Naive thymus-derived CD4-positive, alpha-beta T cell (primary cell): ENCODE measurements at regions of chr6 and their contacts with region 1.

Region 1: DNA sequence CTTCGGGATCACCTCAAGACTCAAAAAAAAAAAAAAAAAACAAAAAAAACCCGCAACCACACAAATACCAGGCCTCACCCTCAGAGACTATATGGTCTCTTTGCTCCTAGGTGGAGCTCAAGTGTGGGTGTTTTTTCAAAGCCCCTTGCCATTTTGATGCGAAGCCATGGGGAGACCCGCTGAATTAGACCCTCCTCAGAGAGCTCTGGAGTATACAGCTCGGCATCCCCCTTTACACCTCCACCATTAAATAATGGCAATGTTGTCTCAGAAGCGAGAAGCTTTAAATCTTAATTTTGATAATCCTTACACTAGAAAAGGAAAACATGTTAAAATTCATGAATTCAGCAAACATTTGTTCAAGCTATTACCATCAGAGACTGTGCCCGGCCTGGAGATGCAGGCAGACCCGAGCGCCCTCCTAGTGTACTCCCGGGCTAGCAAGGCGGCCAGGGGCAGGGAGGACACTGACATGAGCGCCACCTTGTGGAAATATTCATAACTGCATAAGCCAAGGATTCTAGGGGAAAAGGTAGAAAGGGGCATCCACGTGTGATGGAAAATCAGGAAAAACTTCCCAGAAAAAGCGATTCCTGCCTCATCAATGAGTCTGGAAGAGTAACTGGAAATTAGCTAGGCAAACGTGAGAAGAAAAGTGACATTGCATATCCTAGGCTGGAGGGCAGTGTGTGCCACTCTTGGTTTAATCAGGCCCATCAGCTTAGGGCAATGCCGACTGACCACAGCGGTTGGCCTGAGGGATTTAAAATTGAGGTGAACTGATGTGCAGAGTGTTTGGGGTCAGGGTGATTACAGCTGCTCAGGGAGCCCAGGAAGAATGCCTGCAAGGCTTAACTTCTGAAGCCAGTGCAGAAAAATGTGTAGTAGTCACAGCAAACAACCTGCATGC is 72.5 kb downstream of the B3GAT2 start:
- DNase-seq: peak; percentile 19 to 64 (median 45)
- ATAC-seq: peak; percentile 85
- H3K4me3 ChIP-seq: no peak overlapping the region
- H3K4me3 Mint-ChIP-seq: no peak overlapping the region
- H3K27ac ChIP-seq: no peak overlapping the region
- H3K27ac Mint-ChIP-seq: no peak overlapping the region
- H3K4me1 ChIP-seq: no peaks in the 10 kb centered on the region
- H3K4me1 Mint-ChIP-seq: peaks cover 0 to 4% (median 0%) of the 10 kb centered on the region in 7 donors
- H3K27me3 ChIP-seq: no peaks in the 10 kb centered on the region
- H3K27me3 Mint-ChIP-seq: peaks cover 8 to 26% (median 20%) of the 10 kb centered on the region in 5 donors

Region 2: DNA sequence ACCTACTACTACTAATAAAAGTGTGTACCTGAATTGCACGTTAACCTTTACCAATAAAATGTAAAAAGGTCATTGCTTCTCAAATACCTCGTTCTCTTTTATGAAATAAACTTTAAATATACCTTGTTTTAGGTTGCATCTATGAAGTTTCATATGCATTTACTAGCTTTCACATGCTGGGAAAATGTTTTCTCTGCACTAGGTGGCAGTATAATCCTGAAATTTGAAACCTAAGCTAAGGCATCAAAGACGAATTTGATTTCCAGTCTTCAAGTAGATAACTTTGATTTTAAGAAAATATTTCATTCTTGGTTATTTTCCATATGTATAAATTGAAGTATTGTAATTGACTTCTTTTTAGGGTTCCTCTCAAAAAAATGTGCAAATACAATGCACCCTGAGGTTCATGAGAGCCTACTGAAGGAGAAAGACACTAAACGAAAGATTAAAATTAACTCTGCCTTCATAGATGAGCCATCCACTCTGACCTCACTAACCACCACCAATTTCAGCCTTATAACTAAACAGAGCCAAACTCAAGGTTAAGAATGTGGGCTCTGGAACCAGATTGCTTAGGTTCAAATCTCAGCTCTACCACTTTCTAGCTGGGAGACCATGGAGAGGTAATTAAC is 574.1 kb before region 1 on chr6:
- CTCF ChIA-PET with region 1: interaction called, 4 read pairs
- POLR2A ChIA-PET with region 1: no interaction called
- intact Hi-C with region 1: loop called in 1 of 2 experiments (anchors 1 kb)
- DNase-seq: peak in 5 of 9 donors; percentile 7 to 21 (median 11)
- ATAC-seq: no peak
- H3K4me3 ChIP-seq: no peak overlapping the region
- H3K4me3 Mint-ChIP-seq: no peak overlapping the region
- H3K27ac ChIP-seq: no peak overlapping the region
- H3K27ac Mint-ChIP-seq: no peak overlapping the region
- H3K4me1 ChIP-seq: no peaks in the 10 kb centered on the region
- H3K4me1 Mint-ChIP-seq: peaks cover 0 to under 1% (median 0%) of the 10 kb centered on the region in 7 donors
- H3K27me3 ChIP-seq: no peaks in the 10 kb centered on the region
- H3K27me3 Mint-ChIP-seq: peaks cover 9 to 41% (median 28%) of the 10 kb centered on the region in 5 donors

Region 3: GRCh38 chr6:70538376-70538775 is 346.0 kb before region 1 on chr6:
- CTCF ChIA-PET with region 1: no interaction called
- POLR2A ChIA-PET with region 1: no interaction called
- intact Hi-C with region 1: loop called in 1 of 2 experiments (anchors 5 kb)
- DNase-seq: no peak
- ATAC-seq: no peak
- H3K4me3 ChIP-seq: no peak overlapping the region
- H3K4me3 Mint-ChIP-seq: no peak overlapping the region
- H3K27ac ChIP-seq: no peak overlapping the region
- H3K27ac Mint-ChIP-seq: no peak overlapping the region
- H3K4me1 ChIP-seq: no peaks in the 10 kb centered on the region
- H3K4me1 Mint-ChIP-seq: peaks cover 0 to 4% (median 0%) of the 10 kb centered on the region in 7 donors
- H3K27me3 ChIP-seq: no peaks in the 10 kb centered on the region
- H3K27me3 Mint-ChIP-seq: no peaks in the 10 kb centered on the region

Region 4: DNA sequence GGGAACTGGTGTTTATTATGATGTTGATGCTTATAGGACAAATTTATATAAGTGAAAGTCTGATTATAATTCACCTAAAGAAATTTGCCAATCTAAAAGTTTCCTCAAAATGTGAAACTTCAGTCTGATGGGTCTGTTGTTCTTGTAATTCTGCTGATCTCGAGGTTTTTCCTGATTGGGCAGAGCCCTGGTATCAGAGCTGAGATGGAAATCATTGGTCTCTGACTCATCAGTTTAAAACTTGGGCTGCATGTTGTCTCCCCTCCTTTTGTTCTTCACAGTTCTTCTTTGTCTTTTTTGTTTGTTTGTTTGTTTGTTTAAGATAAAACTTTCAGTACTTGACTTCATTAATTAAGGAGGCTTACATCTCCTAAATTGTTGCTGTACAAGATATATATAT is 210.7 kb before region 1 on chr6:
- CTCF ChIA-PET with region 1: no interaction called
- POLR2A ChIA-PET with region 1: no interaction called
- intact Hi-C with region 1: no loop called
- DNase-seq: no peak
- ATAC-seq: no peak
- H3K4me3 ChIP-seq: no peak overlapping the region
- H3K4me3 Mint-ChIP-seq: peak overlapping the region in 1 of 10 donors; percentile 23
- H3K27ac ChIP-seq: no peak overlapping the region
- H3K27ac Mint-ChIP-seq: peak overlapping the region in 3 of 9 donors; percentile 12 to 63 (median 48)
- H3K4me1 ChIP-seq: peaks cover 21 to 22% of the 10 kb centered on the region in 2 donors
- H3K4me1 Mint-ChIP-seq: peaks cover 33 to 86% (median 72%) of the 10 kb centered on the region in 7 donors
- H3K27me3 ChIP-seq: no peaks in the 10 kb centered on the region
- H3K27me3 Mint-ChIP-seq: no peaks in the 10 kb centered on the region

Region 5: DNA sequence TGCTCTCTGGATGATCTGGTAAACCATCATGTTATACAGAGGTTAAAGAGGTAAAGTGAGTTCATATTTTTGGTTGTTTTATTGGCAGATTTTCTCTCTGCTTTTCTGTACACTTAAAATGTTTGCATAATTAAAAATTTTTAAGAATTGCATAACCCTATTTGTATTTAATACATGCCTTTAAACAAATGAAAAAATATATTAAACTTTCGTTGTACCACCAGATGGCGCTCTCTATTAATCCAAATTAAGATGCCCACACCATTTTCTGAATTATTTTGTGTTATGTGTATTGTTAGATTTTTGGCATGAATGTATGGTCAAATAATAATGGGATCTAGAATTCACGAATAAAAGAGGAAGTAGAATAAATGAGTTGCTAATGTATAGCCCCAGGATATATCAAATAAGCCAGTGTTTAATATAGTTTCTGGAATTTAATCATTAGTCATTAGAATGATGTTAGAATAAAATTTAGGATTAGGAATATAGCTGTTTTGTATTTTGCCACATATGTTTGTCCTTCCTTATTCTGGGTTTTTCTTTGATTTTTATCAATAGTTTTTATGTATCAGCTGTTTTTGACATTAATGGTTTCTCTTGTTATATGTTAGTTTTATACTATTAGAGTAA is 177.7 kb before region 1 on chr6:
- CTCF ChIA-PET with region 1: interaction called, 37 read pairs
- POLR2A ChIA-PET with region 1: no interaction called
- intact Hi-C with region 1: loop called (anchors 1 kb)
- DNase-seq: peak in 6 of 9 donors; percentile 14 to 50 (median 45)
- ATAC-seq: peak; percentile 47
- H3K4me3 ChIP-seq: no peak overlapping the region
- H3K4me3 Mint-ChIP-seq: no peak overlapping the region
- H3K27ac ChIP-seq: no peak overlapping the region
- H3K27ac Mint-ChIP-seq: no peak overlapping the region
- H3K4me1 ChIP-seq: peaks cover 5% of the 10 kb centered on the region in 2 donors
- H3K4me1 Mint-ChIP-seq: peaks cover 25 to 73% (median 59%) of the 10 kb centered on the region in 7 donors
- H3K27me3 ChIP-seq: no peaks in the 10 kb centered on the region
- H3K27me3 Mint-ChIP-seq: no peaks in the 10 kb centered on the region

Region 6: GRCh38 chr6:71043902-71044301 is 159.6 kb after region 1 on chr6:
- CTCF ChIA-PET with region 1: no interaction called
- POLR2A ChIA-PET with region 1: no interaction called
- intact Hi-C with region 1: no loop called
- DNase-seq: no peak
- ATAC-seq: peak; percentile 41
- H3K4me3 ChIP-seq: no peak overlapping the region
- H3K4me3 Mint-ChIP-seq: no peak overlapping the region
- H3K27ac ChIP-seq: no peak overlapping the region
- H3K27ac Mint-ChIP-seq: no peak overlapping the region
- H3K4me1 ChIP-seq: no peaks in the 10 kb centered on the region
- H3K4me1 Mint-ChIP-seq: no peaks in the 10 kb centered on the region
- H3K27me3 ChIP-seq: no peaks in the 10 kb centered on the region
- H3K27me3 Mint-ChIP-seq: peaks cover 0 to 6% (median 0%) of the 10 kb centered on the region in 5 donors

Region 7: GRCh38 chr6:71349395-71349794 is 465.1 kb after region 1 on chr6:
- CTCF ChIA-PET with region 1: no interaction called
- POLR2A ChIA-PET with region 1: no interaction called
- intact Hi-C with region 1: loop called in 1 of 2 experiments (anchors 10 kb)
- DNase-seq: peak in 4 of 9 donors; percentile 8 to 20 (median 16)
- ATAC-seq: peak; percentile 40
- H3K4me3 ChIP-seq: no peak overlapping the region
- H3K4me3 Mint-ChIP-seq: no peak overlapping the region
- H3K27ac ChIP-seq: no peak overlapping the region
- H3K27ac Mint-ChIP-seq: no peak overlapping the region
- H3K4me1 ChIP-seq: no peaks in the 10 kb centered on the region
- H3K4me1 Mint-ChIP-seq: no peaks in the 10 kb centered on the region
- H3K27me3 ChIP-seq: no peaks in the 10 kb centered on the region
- H3K27me3 Mint-ChIP-seq: peaks cover 0 to 8% (median 4%) of the 10 kb centered on the region in 5 donors